Left lung (tissue), 14 donors: ENCODE measurements at regions of chr17 and their contacts with region 1.

Region 1: GRCh38 chr17:19447085-19447583 is 36.1 kb downstream of the RNF112 start:
- DNase-seq: peak in 2 of 4 donors; percentile 81 to 86
- ATAC-seq: peak; percentile 87
- H3K4me3 ChIP-seq: no peak overlapping the region
- H3K27ac ChIP-seq: no peak overlapping the region
- H3K4me1 ChIP-seq: peaks cover 6 to 27% of the 10 kb centered on the region in 2 donors
- H3K27me3 ChIP-seq: no peaks in the 10 kb centered on the region
- CTCF ChIP-seq: peak; percentile 83 to 99

Region 2: DNA sequence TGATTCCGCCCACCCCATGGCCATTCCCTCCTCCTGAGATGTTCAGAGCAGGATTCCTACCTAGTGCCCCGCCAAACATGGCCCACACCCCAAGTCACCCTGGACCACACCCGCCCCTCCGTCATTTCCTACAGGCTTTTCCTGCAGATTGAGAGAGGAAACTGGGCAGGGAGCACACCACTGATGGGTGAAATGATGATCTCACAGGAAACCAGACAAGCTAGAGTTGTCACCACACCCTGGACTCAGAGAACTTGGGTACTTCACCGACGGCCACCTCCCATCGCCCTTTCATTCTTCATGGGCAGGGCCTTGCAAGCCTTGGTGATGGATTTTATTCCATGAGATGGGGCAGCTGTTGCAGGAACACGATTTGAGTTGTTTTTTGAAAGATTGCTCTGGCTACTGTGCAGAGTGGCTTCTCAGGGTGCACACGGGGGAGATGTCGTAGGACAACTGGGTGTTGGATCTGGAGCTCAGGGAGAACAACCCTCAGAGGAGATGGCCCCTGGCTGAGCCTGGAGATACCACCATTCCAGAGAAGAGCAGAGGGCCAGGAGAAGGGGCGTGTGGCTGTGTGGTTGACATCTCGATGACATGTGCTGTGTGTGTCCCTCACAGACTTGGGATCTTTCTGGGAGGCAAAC is 77.2 kb before region 1 on chr17:
- intact Hi-C with region 1: loop called (anchors 5 to 10 kb)
- DNase-seq: peak in 1 of 4 donors; percentile 43
- ATAC-seq: peak; percentile 57
- H3K4me3 ChIP-seq: no peak overlapping the region
- H3K27ac ChIP-seq: peak overlapping the region; percentile 39 to 61
- H3K4me1 ChIP-seq: peaks cover 0 to 37% of the 10 kb centered on the region in 2 donors
- H3K27me3 ChIP-seq: peaks cover 0 to 5% of the 10 kb centered on the region in 2 donors
- CTCF ChIP-seq: no peak

Region 3: GRCh38 chr17:19377602-19378392 is 69.3 kb before region 1 on chr17:
- intact Hi-C with region 1: loop called in 1 of 2 experiments (anchors 10 kb)
- DNase-seq: peak; percentile 99 to 100 (median 99)
- ATAC-seq: peak; percentile 94
- H3K4me3 ChIP-seq: peak overlapping the region; percentile 81 to 91
- H3K27ac ChIP-seq: peak overlapping the region; percentile 95 to 98
- H3K4me1 ChIP-seq: peaks cover 10 to 42% of the 10 kb centered on the region in 2 donors
- H3K27me3 ChIP-seq: no peaks in the 10 kb centered on the region
- CTCF ChIP-seq: no peak